ENCODE measurements at regions of chr1 and their contacts with region 1.

Region 1: DNA sequence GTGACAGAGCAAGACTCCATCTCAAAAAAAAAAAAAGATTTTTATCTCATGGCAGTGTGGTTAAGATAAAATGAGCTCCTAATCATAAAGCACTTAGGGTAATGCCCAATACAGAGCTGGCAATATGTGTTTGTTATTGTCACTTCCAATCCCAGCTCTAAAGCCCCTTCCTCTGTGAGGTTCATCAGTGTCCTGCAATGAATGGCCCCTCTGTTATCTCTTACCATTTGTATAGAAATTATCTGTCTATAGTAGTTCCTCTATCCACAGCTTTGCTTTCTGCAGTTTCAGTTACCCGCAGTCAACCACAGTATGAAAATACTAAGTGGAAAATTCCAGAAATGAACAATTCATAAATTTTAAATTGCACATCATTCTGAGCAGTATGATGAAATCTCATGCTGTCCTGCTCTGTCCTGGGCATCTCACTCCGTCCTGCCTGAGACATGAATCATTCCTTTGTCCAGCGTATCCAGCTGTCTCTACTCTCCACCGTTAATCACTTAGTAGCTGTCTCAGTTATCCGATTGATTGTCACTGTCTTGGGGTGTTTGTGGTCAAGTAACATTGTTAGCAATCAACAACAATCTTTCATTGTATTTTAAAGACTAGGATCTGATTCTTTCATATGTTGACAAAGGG is 50.2 kb upstream of the DNAH14 start:
- DNase-seq: no peak
- ATAC-seq: peak; percentile 16; the same call in 2 of the 3 replicates
- H3K4me3 ChIP-seq: no peak overlapping the region
- H3K27ac ChIP-seq: no peak overlapping the region
- H3K4me1 ChIP-seq: no peaks in the 10 kb centered on the region
- H3K27me3 ChIP-seq: no peaks in the 10 kb centered on the region
- CTCF ChIP-seq: no peak
- EP300 ChIP-seq: no peak
- POLR2A ChIP-seq: no peak
- RAD21 ChIP-seq: no peak

Region 2: GRCh38 chr1:224906340-224906739 is 27.1 kb after region 1 on chr1:
- CTCF ChIA-PET with region 1: interaction called, 3 read pairs
- POLR2A ChIA-PET with region 1: no interaction called
- RAD21 ChIA-PET with region 1: interaction called, 10 read pairs
- SMC1A ChIA-PET with region 1: interaction called, 5 read pairs
- in situ Hi-C with region 1: no loop called
- intact Hi-C with region 1: no loop called
- DNase-seq: no peak
- ATAC-seq: peak; percentile 59
- H3K4me3 ChIP-seq: no peak overlapping the region
- H3K27ac ChIP-seq: no peak overlapping the region
- H3K4me1 ChIP-seq: no peaks in the 10 kb centered on the region
- H3K27me3 ChIP-seq: no peaks in the 10 kb centered on the region
- CTCF ChIP-seq: no peak
- EP300 ChIP-seq: no peak
- POLR2A ChIP-seq: no peak
- RAD21 ChIP-seq: no peak

Measured in GM12878 (cell line).